Cardiac septum (tissue), 1 donor: ENCODE measurements at regions of chr1 and their contacts with region 1.

Region 1: GRCh38 chr1:81305997-81306452 is 494.7 kb upstream of the ADGRL2 start:
- DNase-seq: no peak

Region 2: DNA sequence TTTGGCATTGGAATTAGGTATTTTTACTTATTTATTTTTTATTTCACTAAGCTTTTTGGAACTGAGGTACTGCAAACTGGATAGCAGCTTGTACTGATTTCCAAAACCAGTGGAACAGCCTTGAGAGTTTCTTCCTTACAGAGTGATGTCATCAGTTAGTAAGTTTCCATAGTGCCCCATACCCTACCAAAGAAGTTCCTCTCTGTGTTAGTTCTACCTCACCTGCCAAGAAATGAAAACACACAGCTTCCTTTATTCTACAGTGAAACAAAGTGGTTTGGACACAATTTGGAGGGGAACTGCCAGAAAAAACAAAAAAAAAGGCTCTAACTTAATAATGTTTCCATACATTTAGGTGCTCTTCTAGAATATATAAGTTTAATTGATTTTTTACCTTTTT is 63.8 kb after region 1 on chr1:
- intact Hi-C with region 1: no loop called
- DNase-seq: no peak

Region 3: GRCh38 chr1:81493102-81493869 is 187.3 kb after region 1 on chr1:
- intact Hi-C with region 1: loop called (anchors 5 kb)
- DNase-seq: no peak

Region 4: DNA sequence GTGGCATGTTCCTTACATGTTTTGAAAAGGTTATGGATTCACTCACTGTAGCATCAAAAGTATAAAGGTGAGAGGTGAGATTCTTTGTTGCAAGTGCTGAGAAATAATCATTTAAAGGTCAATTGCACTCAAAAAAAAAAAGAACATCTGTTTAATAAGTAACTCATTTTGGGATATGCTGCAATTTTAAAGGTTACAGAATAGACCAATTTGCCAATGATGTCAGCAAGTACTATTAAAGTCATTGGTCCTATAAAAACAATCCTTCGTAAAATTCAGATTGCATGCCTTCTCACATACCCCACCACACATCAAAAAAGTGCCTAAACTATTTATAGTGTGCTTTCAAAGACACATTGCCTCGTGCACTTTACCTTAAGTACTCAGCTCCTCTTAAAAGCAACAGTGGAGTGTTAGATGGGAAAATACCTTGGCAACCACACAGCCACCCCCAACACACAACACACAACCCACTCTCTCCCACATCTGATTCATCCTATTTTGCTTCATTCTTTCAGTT is 276.5 kb after region 1 on chr1:
- intact Hi-C with region 1: no loop called
- DNase-seq: no peak